ENCODE measurements at regions of chr4 and their contacts with region 1.

Region 1: GRCh38 chr4:88378691-88379559 is at the start of gene HERC6:
- DNase-seq: peak; percentile 84
- H3K4me3 Mint-ChIP-seq: peak within 1 kb of the TSS; percentile 85
- H3K27ac Mint-ChIP-seq: peak within 1 kb of the TSS; percentile 69
- H3K4me1 Mint-ChIP-seq: peaks cover 40% of the 10 kb centered on the region
- H3K27me3 Mint-ChIP-seq: no peaks in the 10 kb centered on the region
- total RNA-seq, gene HERC6: 9.9 to 10.2 TPM

Region 2: DNA sequence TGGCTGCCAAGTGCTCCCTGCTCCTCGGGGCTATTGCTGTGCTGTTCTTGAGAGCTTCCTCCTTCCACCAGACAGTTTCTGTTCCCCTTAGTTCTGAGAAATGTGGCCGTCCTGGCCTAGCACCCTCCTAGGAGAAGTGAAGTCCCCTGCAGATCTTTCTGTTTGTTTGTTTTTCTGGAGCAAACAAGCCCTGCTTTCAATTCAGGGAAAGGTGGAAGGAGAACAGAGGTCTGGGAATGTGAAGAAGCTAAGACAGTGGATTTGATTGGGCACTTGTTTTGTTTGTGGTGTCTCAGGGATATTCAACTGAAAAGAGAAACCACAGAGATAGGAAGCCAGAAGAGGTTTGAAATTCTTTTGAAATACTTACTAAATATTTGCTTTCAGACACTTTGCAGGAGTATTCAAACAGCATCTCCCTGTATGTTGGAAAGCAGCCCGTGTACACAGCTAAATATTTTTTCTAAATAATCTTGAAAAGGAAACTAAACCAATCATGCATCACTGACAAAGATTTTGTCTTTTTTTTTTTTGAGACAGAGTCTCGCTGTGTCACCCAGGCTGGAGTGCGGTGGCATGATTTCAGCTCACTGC is 58.0 kb before region 1 on chr4:
- CTCF ChIA-PET with region 1: interaction called, 4 read pairs
- intact Hi-C with region 1: loop called (anchors 2 kb)
- DNase-seq: peak; percentile 28
- H3K4me3 Mint-ChIP-seq: peak overlapping the region; percentile 49
- H3K27ac Mint-ChIP-seq: peak overlapping the region; percentile 59
- H3K4me1 Mint-ChIP-seq: peaks cover 15% of the 10 kb centered on the region
- H3K27me3 Mint-ChIP-seq: no peaks in the 10 kb centered on the region

Region 3: GRCh38 chr4:88489100-88489761 is 110.3 kb after region 1 on chr4:
- CTCF ChIA-PET with region 1: no interaction called
- intact Hi-C with region 1: loop called (anchors 1 kb)
- DNase-seq: no peak
- H3K4me3 Mint-ChIP-seq: no peak overlapping the region
- H3K27ac Mint-ChIP-seq: peak overlapping the region; percentile 54
- H3K4me1 Mint-ChIP-seq: peaks cover 12% of the 10 kb centered on the region
- H3K27me3 Mint-ChIP-seq: no peaks in the 10 kb centered on the region

Region 4: DNA sequence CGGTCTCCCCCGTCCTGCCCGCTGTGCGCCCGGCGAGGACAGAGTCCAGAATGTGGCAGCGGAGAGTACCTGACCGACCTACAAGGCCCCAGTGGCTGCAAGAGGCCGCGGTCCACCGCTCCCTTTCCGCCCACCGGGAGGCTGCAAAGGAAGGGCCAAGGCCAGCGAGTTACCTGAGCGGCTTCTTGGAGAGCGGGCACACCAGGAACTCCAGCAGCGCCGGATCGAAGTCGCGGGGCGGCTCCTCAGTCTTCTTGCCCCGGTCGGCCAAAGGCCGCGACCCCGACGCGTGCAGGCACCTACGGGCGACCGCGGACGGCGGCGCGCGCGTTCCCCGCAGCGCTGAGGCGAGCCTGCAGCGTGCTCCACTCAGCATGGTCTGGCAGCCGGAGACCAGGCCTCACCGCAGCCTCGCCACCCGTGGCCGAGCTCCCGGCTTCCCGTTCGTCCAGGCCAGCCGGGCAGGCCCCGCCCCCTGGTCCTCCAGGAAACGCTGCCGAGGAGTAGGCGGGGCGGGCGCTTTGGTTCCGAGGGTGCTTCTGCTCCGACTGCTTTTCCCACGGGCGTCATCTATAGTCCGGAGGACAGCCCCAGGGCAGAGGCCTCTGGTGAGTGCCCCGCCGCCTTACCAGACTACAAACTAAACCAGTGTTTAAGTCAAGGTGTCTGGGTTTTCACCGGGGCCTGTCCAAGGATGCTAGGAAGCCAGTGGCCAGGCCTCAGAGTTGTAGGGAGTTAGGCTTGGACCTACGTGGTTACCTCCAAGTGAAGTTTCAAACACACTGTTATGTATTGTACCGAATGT is 144.6 kb after region 1 on chr4 and contains the start of gene PYURF:
- CTCF ChIA-PET with region 1: interaction called, 3 read pairs
- intact Hi-C with region 1: loop called (anchors 1 kb)
- DNase-seq: peak; percentile 85
- H3K4me3 Mint-ChIP-seq: peak within 1 kb of the TSS; percentile 92
- H3K27ac Mint-ChIP-seq: peak within 1 kb of the TSS; percentile 91
- H3K4me1 Mint-ChIP-seq: peaks cover 40% of the 10 kb centered on the region
- H3K27me3 Mint-ChIP-seq: no peaks in the 10 kb centered on the region
- total RNA-seq, gene PYURF: 51.5 to 54.2 TPM

Region 5: GRCh38 chr4:88613417-88613875 is 234.5 kb after region 1 on chr4:
- CTCF ChIA-PET with region 1: no interaction called
- intact Hi-C with region 1: loop called (anchors 5 kb)
- DNase-seq: peak; percentile 62
- H3K4me3 Mint-ChIP-seq: peak overlapping the region; percentile 64
- H3K27ac Mint-ChIP-seq: peak overlapping the region; percentile 92
- H3K4me1 Mint-ChIP-seq: peaks cover 82% of the 10 kb centered on the region
- H3K27me3 Mint-ChIP-seq: no peaks in the 10 kb centered on the region

Region 6: DNA sequence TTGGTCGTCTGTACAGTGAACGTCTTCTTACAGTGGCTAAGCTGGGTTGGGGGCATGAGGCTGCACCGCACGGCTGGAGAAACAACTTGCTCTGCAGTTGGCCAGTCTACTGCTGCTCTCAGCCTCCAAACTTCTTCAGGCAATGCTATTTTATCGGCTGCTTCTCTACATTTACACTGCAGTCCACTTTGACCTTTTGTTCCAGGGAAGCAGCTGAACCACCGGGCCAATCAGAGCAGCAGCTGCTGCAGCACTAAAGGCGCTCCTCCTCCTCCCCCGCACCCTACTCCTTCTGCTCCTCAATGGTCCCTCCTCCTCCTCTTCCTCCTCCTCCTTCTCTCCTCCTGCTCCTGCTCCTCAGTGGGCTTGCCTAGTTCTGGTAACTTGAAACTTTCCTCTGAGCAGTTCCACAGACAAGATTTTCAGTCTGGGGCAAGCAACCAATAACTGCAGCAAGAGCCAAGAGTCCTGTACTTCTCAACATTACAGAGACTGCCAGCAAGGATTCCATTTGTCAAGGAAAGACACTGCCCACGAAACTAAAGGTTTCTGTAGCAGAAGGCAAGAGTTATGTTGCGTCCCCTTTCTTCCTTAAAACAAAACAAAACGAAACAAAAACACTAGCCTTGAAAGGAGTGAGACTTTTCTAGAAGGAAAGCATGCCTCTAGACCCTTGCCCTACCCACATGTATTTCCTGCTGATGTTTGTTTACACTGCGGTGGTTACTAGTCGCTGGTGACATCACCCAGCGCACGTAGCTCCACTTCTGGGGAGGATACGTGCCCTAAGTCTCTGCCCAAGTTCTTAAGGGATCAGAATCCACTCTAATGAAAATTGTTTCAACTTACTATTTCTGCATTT is 444.4 kb after region 1 on chr4:
- CTCF ChIA-PET with region 1: no interaction called
- intact Hi-C with region 1: loop called (anchors 5 kb)
- DNase-seq: peak; percentile 78
- H3K4me3 Mint-ChIP-seq: peak overlapping the region; percentile 93
- H3K27ac Mint-ChIP-seq: peak overlapping the region; percentile 90
- H3K4me1 Mint-ChIP-seq: peaks cover 25% of the 10 kb centered on the region
- H3K27me3 Mint-ChIP-seq: no peaks in the 10 kb centered on the region

Region 7: GRCh38 chr4:89101256-89102161 is 722.6 kb after region 1 on chr4:
- CTCF ChIA-PET with region 1: no interaction called
- intact Hi-C with region 1: loop called (anchors 10 kb)
- DNase-seq: no peak
- H3K4me3 Mint-ChIP-seq: no peak overlapping the region
- H3K27ac Mint-ChIP-seq: peak overlapping the region; percentile 48
- H3K4me1 Mint-ChIP-seq: peaks cover 25% of the 10 kb centered on the region
- H3K27me3 Mint-ChIP-seq: peaks cover 3% of the 10 kb centered on the region

Measured in activated naive CD4-positive, alpha-beta T cell treated with anti-CD3 and anti-CD28 coated beads for 36 hours (primary cell).